ENCODE measurements at regions of chr1 and their contacts with region 1.

Region 1: DNA sequence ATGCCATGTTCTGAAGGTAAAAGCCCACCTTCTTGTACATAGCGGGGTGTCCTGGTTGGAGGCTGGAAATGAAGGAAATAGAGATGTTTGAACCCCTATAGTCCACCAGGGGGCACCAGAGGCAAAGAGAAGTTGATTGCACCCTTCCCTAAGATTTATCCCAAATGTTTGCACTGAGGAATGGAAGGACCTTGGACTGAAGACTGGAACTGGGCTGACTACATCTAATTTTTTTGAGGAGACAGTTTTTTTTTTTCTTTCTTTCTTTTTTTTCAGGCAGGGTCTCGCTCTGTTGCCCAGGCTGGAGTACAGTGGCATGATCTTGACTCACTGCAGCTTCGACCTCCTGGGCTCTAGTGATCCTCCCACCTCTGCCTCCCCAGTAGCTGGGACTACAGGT is 55.3 kb upstream of the EIF4G3 start:
- DNase-seq: peak; percentile 37
- ATAC-seq: peak; percentile 66
- H3K4me3 Mint-ChIP-seq: no peak overlapping the region
- H3K27ac Mint-ChIP-seq: no peak overlapping the region
- H3K4me1 Mint-ChIP-seq: peaks cover 6% of the 10 kb centered on the region; the same call in 1 of the 2 replicates
- H3K27me3 Mint-ChIP-seq: no peaks in the 10 kb centered on the region
- CTCF ChIP-seq: peak; percentile 65

Region 2: GRCh38 chr1:21244986-21245687 is 13.1 kb after region 1 on chr1:
- CTCF ChIA-PET with region 1: interaction called, 19 read pairs
- POLR2A ChIA-PET with region 1: no interaction called
- DNase-seq: peak; percentile 67
- ATAC-seq: peak; percentile 88
- H3K4me3 Mint-ChIP-seq: no peak overlapping the region
- H3K27ac Mint-ChIP-seq: no peak overlapping the region
- H3K4me1 Mint-ChIP-seq: peaks cover 7% of the 10 kb centered on the region
- H3K27me3 Mint-ChIP-seq: no peaks in the 10 kb centered on the region
- CTCF ChIP-seq: peak; percentile 66